ENCODE measurements at regions of chr2 and their contacts with region 1.

Region 1: DNA sequence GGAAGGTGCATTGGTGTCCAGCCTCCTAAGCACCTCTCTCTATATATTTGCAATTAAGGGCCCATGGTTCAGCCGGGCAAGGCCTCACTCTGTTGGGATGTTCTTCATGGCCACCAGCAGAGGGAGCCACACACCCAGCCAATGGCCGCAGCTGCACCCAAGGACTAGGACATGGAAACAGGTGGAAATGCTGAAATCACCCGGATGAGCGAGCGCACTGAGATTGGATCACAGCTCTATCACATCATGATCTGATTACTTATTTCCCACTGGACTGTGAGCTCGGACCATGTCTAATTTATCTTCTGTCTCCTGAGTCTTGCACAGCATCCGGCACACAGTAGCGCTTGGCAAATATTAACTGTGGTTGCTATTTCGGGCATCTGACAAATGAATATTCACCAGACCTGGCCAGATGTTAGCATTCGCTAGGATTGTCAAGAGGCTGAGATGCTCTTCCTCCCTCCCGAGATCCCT is 31.2 kb downstream of the KIF3C start:
- DNase-seq: peak; percentile 80
- ATAC-seq: peak; percentile 96

Region 2: DNA sequence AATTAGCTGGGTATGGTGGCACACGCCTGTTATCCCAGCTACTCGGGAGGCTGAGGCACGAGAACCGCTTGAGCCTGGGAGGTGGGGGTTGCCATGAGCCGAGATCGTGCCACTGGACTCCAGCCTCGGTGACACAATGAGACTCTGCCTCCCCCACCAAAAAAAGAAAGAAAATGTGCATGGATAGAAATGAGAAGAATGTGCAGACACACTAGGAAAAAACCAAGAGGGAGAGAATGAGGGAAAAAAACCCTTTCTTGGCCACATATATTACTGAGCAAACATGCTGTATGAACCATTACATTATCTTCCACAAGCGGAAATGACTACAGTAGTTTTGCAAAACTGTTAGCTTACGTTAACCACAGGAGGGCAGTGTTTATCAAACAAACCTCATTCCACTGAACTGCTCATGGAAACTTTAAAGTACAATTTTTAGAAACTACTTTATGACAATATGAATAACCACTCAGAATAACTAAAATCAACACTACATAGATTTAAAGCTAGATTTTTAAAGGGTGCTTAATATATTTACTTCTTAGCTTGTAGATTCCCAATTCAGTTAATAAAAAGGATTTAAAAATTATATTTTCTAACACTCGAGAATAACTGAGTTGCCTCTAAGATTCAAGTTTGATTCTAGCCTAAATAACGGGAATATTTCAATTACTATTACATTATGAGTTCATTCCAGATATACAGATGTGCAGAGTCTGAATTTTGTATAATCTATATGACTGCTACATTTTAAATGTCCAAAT is 99.2 kb before region 1 on chr2:
- intact Hi-C with region 1: loop called (anchors 2 to 10 kb)
- DNase-seq: no peak
- ATAC-seq: peak; percentile 91 to 92

Measured in left cardiac atrium (tissue), 4 donors.